ENCODE measurements at regions of chr1 and their contacts with region 1.

Region 1: DNA sequence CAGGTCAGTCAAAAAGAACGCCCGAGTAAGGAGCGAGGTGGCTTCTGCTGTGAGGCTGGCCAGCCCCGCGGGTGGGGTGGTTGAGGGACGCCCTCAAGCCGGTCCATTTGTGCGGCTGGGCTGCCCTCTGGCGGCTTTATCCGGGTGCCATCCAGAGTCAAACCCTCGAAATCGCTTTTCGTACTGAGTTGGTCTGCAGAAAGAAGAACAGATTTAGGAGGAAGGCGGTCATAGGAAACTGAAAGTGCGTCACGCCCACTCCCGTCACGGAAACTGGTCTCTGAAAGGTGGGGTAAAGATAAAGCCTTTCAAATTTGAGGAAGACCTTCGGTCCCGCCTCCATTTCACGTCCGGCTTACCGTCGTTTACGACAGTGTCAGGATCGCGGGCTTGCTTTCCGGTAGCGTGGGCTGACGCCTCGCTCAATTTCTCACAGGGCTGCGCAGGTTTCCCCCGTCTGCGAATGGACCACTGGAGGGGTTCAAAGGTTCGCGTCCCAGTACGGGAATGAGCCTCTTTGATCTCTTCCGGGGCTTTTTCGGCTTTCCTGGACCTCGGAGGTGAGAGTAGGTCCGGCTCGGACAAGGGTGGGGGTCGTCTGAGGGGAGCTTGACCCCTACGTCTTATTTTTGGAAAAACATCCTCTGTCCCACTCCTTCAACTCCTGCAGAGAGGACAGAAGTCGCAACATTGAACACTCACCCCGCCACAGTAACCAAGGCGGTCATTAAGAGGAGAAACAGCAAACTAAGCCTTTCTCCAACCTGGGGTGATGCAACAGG is at the start of gene HAX1:
- DNase-seq: peak; percentile 96
- H3K4me3 ChIP-seq: peak within 1 kb of the TSS; percentile 72 to 96 (median 95)
- H3K27ac ChIP-seq: peak within 1 kb of the TSS; percentile 76
- H3K4me1 ChIP-seq: peaks cover 4% of the 10 kb centered on the region
- H3K27me3 ChIP-seq: no peaks in the 10 kb centered on the region
- CTCF ChIP-seq: peak; percentile 61 to 82
- total RNA-seq, gene HAX1: 135 to 174 TPM

Region 2: DNA sequence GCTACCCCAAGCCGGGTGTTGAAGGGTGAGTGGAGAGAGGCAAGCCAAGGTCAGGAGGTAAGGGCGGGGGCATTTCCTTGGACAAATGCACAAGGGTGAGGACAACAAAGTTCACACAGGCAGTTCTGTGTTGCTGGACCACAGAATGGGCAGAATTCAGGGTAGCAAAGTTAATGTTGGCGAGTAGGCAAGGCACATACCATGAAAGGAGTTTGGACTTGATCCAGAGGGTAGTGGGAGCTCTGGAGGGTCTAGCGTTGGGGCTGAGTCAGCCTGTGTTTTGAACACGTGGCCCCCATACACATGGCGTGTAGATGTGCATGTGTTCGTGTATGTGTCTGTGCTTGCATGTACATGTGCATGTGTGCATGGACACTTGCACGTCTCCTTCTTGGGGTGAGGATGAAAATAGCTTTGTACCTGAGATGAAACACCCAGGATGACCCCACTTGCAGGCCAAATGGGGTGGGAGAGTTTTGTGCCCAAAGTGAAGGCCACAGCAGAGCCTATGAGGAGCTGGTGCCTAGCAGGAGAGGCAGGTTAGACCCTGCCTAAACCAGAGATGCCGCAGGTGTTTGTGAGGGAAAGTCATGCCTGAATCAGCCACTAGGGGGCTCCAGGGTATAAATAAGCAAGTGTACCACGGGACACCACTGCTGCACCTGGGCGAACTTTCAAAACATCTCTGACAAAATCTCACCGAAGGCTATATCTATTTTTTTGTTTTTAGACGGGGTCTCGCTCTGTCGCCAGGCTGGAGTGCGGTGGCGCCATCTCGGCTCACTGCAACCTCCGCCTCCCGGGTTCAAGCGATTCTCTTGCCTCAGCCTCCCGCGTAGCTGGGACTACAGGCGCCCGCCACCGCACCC is 475.4 kb before region 1 on chr1:
- CTCF ChIA-PET with region 1: no interaction called
- dilution Hi-C with region 1: no loop called
- in situ Hi-C with region 1: no loop called
- intact Hi-C with region 1: loop called (anchors 5 kb)
- DNase-seq: peak; percentile 59
- H3K4me3 ChIP-seq: no peak overlapping the region
- H3K27ac ChIP-seq: no peak overlapping the region
- H3K4me1 ChIP-seq: no peaks in the 10 kb centered on the region
- H3K27me3 ChIP-seq: no peaks in the 10 kb centered on the region
- CTCF ChIP-seq: peak; percentile 88 to 90

Region 3: GRCh38 chr1:154183045-154183915 is 89.1 kb before region 1 on chr1:
- CTCF ChIA-PET with region 1: no interaction called
- dilution Hi-C with region 1: no loop called
- in situ Hi-C with region 1: loop called in 1 of 2 experiments (anchors 5 kb)
- intact Hi-C with region 1: loop called (anchors 1 kb)
- DNase-seq: peak; percentile 99
- H3K4me3 ChIP-seq: peak overlapping the region; percentile 85 to 96 (median 91)
- H3K27ac ChIP-seq: peak overlapping the region; percentile 94
- H3K4me1 ChIP-seq: peaks cover 34% of the 10 kb centered on the region
- H3K27me3 ChIP-seq: no peaks in the 10 kb centered on the region
- CTCF ChIP-seq: peak in 1 of 2 donors; percentile 10

Region 4: GRCh38 chr1:154304664-154305337 is 32.4 kb after region 1 on chr1:
- CTCF ChIA-PET with region 1: no interaction called
- dilution Hi-C with region 1: loop called (anchors 5 kb)
- in situ Hi-C with region 1: no loop called
- intact Hi-C with region 1: no loop called
- DNase-seq: peak; percentile 40
- H3K4me3 ChIP-seq: no peak overlapping the region
- H3K27ac ChIP-seq: no peak overlapping the region
- H3K4me1 ChIP-seq: no peaks in the 10 kb centered on the region
- H3K27me3 ChIP-seq: no peaks in the 10 kb centered on the region
- CTCF ChIP-seq: no peak

Region 5: DNA sequence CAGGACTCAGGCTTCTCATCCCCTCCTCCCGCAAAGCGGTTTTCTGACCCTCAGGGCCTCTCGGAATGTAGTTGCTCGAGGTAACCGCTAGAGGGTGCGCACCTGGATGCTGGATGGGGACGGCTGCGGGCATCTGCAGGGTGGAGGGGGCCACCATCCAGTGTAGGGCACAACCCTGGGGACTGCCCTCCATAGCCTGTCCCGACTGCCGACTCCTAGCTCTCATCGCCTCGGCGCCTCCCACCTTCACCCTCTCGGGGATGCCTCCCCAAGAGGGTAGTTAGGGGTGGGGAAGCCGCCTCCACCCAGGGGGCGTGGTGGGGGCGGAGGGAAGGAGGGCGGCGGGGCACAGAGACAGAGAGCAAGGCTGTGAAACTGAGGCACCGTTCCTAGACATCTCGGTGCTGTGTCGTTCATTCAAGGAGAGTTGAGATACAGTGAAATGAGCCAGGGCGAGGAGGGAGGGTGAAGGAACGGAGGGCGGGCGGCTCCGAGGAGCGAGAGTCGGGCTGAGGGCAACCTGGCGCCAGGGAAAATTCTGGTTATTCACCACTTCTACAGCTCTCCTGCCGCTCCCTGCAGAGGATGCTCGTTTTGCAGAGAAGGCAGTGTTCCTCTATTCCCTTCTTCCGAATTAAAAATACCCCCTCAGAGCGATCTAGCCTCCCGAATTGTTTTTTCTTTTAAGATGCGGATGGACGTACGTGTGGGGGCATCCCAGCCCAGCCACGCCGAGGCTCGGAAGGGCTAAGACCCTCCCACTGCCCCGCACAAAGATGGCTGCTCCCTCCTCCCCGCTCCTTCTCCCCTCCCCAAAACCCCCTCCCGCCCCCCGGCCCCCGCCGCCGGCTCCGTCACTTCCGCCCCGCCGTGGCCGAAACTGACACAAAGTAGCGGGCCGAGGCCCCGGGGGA is 52.5 kb after region 1 on chr1 and contains the start of gene ATP8B2:
- CTCF ChIA-PET with region 1: no interaction called
- dilution Hi-C with region 1: no loop called
- in situ Hi-C with region 1: no loop called
- intact Hi-C with region 1: loop called (anchors 2 kb)
- DNase-seq: peak; percentile 53
- H3K4me3 ChIP-seq: peak within 1 kb of the TSS; percentile 55 to 65 (median 63)
- H3K27ac ChIP-seq: no peak within 1 kb of the TSS
- H3K4me1 ChIP-seq: peaks cover 29% of the 10 kb centered on the region
- H3K27me3 ChIP-seq: no peaks in the 10 kb centered on the region
- CTCF ChIP-seq: peak; percentile 79 to 92
- total RNA-seq, gene ATP8B2: 11.5 TPM

Region 6: GRCh38 chr1:154335025-154335714 is 62.8 kb after region 1 on chr1:
- CTCF ChIA-PET with region 1: no interaction called
- dilution Hi-C with region 1: no loop called
- in situ Hi-C with region 1: no loop called
- intact Hi-C with region 1: loop called (anchors 2 kb)
- DNase-seq: peak; percentile 54
- H3K4me3 ChIP-seq: no peak overlapping the region
- H3K27ac ChIP-seq: no peak overlapping the region
- H3K4me1 ChIP-seq: peaks cover 3% of the 10 kb centered on the region
- H3K27me3 ChIP-seq: no peaks in the 10 kb centered on the region
- CTCF ChIP-seq: peak; percentile 80 to 88

Measured in mammary epithelial cell (primary cell).